ENCODE measurements at regions of chr13 and their contacts with region 1.

Region 1: GRCh38 chr13:21638319-21639282 is 32.3 kb upstream of the FGF9 start:
- DNase-seq: no peak
- ATAC-seq: no peak
- H3K4me3 ChIP-seq: no peak overlapping the region
- H3K27ac ChIP-seq: no peak overlapping the region
- H3K4me1 ChIP-seq: no peaks in the 10 kb centered on the region
- H3K27me3 ChIP-seq: no peaks in the 10 kb centered on the region
- CTCF ChIP-seq: peak; percentile 88

Region 2: GRCh38 chr13:22278336-22278929 is 639.8 kb after region 1 on chr13:
- intact Hi-C with region 1: loop called (anchors 5 kb)
- DNase-seq: no peak
- ATAC-seq: no peak
- H3K4me3 ChIP-seq: no peak overlapping the region
- H3K27ac ChIP-seq: no peak overlapping the region
- H3K4me1 ChIP-seq: no peaks in the 10 kb centered on the region
- H3K27me3 ChIP-seq: no peaks in the 10 kb centered on the region
- CTCF ChIP-seq: peak; percentile 28

Measured in psoas muscle (tissue), 8 donors.